ENCODE measurements at regions of chr13 and their contacts with region 1.

Region 1: GRCh38 chr13:28718543-28719226 is at the start of gene SLC46A3:
- DNase-seq: peak; percentile 100
- ATAC-seq: peak; percentile 99
- H3K4me3 ChIP-seq: peak within 1 kb of the TSS; percentile 45 to 49
- H3K27ac ChIP-seq: peak within 1 kb of the TSS in 1 of 2 donors; percentile 97
- H3K4me1 ChIP-seq: no peaks in the 10 kb centered on the region
- H3K27me3 ChIP-seq: no peaks in the 10 kb centered on the region
- total RNA-seq, gene SLC46A3: 6.7 to 15.1 TPM

Region 2: DNA sequence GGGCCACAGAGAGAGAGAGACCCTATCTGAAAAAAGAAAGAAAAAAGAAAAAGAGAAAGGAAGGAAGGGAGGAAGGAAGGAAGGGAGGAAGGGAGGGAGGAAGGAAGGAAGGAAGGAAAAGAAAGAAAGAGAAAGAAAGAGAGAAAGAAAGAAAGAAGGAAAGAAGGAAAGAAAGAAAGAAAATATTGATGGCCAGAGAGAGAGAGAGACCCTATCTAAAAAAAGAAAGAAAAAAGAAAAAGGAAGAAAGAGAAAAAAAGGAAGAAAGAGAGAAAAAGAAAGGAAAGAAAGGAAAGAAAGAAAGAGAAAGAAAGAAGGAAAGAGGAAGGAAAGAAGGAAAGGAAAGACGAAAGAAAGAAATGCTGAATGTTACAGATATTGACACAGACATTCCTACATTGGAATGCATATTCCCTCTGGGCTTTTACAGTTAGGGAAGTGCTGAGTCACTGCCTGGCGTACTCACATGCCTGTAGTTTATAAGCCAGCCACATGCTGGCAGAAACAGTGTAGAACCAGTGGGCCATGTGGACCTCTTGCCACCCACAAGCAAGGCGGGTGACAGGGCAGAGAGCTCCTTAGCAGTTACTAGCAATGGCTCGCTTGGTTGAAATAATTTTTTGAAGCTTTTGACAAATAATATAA is 34.7 kb after region 1 on chr13:
- intact Hi-C with region 1: loop called (anchors 5 kb)
- DNase-seq: peak; percentile 79 to 86
- ATAC-seq: peak; percentile 86
- H3K4me3 ChIP-seq: no peak overlapping the region
- H3K27ac ChIP-seq: peak overlapping the region in 1 of 2 donors; percentile 82
- H3K4me1 ChIP-seq: no peaks in the 10 kb centered on the region
- H3K27me3 ChIP-seq: no peaks in the 10 kb centered on the region

Measured in aorta (tissue), 5 donors.